Endothelial cell of umbilical vein (primary cell): ENCODE measurements at regions of chr3 and their contacts with region 1.

Region 1: GRCh38 chr3:10192953-10193691 is 28.4 kb downstream of the IRAK2 start:
- DNase-seq: peak; percentile 92
- H3K4me3 ChIP-seq: no peak overlapping the region
- H3K27ac ChIP-seq: peak overlapping the region; percentile 100
- H3K4me1 ChIP-seq: peaks cover 54% of the 10 kb centered on the region
- H3K27me3 ChIP-seq: no peaks in the 10 kb centered on the region
- CTCF ChIP-seq: peak; percentile 81 to 84
- POLR2A ChIP-seq: no peak

Region 2: GRCh38 chr3:10115326-10116137 is 77.6 kb before region 1 on chr3 and contains the start of gene BRK1:
- CTCF ChIA-PET with region 1: interaction called, 3 read pairs
- POLR2A ChIA-PET with region 1: no interaction called
- dilution Hi-C with region 1: no loop called
- intact Hi-C with region 1: loop called (anchors 2 kb)
- DNase-seq: peak; percentile 96
- H3K4me3 ChIP-seq: peak within 1 kb of the TSS; percentile 63 to 87 (median 68)
- H3K27ac ChIP-seq: peak within 1 kb of the TSS; percentile 63
- H3K4me1 ChIP-seq: peaks cover 9% of the 10 kb centered on the region
- H3K27me3 ChIP-seq: no peaks in the 10 kb centered on the region
- CTCF ChIP-seq: no peak
- POLR2A ChIP-seq: peak; percentile 98
- total RNA-seq, gene BRK1: 123 and 133 TPM in 2 replicates

Region 3: DNA sequence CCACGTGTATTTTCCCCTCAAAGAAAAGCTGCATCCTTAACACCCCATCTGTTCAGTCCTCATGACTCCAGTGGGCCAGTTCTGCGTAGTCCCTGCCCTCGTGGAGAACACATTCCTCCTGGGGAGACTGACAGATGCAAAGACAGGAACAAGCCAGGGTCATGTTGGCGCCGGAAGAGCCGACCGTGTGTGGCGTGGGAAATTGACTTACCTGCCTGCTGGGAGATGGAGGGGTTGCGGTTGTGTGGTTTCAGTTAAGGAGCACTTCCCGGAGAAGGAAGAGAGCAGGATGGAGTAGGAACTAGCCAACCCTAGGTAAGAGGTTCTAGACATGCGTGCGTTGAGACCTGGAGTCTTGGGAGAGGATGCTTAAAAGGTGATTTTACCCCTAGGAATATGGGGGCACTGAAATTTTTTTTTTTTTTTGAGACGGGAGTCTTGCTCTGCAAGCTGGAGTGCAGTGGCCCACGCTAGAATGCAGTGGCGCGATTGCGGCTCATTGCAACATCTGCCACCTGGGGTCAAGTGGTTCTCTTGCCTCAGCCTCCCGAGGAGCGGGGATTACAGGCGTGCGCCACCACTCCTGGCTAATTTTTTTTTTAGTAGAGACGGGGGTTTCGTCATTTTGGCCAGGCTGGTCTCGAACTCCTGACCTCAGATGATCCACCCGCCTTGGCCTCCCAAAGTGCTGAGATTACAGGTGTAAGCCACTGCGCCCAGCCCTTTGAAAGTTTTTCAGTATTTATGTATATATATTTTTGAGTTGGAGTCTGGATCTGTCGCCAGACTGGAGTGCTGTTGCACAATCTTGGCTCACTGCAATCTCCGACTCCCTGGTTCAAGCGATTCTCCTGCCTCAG is 50.2 kb before region 1 on chr3:
- CTCF ChIA-PET with region 1: interaction called, 11 read pairs
- POLR2A ChIA-PET with region 1: interaction called, 6 read pairs
- dilution Hi-C with region 1: no loop called
- intact Hi-C with region 1: loop called (anchors 2 kb)
- DNase-seq: no peak
- H3K4me3 ChIP-seq: peak overlapping the region; percentile 52 to 74 (median 60)
- H3K27ac ChIP-seq: no peak overlapping the region
- H3K4me1 ChIP-seq: peaks cover 11% of the 10 kb centered on the region
- H3K27me3 ChIP-seq: no peaks in the 10 kb centered on the region
- CTCF ChIP-seq: no peak
- POLR2A ChIP-seq: no peak

Region 4: GRCh38 chr3:10164546-10165393 is 28.4 kb before region 1 on chr3 and contains the start of gene IRAK2:
- CTCF ChIA-PET with region 1: interaction called, 11 read pairs
- POLR2A ChIA-PET with region 1: interaction called, 3 read pairs
- dilution Hi-C with region 1: no loop called
- intact Hi-C with region 1: loop called (anchors 1 kb)
- DNase-seq: peak; percentile 66
- H3K4me3 ChIP-seq: peak within 1 kb of the TSS; percentile 63 to 79 (median 78)
- H3K27ac ChIP-seq: peak within 1 kb of the TSS; percentile 42
- H3K4me1 ChIP-seq: peaks cover 2% of the 10 kb centered on the region
- H3K27me3 ChIP-seq: no peaks in the 10 kb centered on the region
- CTCF ChIP-seq: peak; percentile 40 to 79
- POLR2A ChIP-seq: peak; percentile 75
- total RNA-seq, gene IRAK2: 10.0 and 11.1 TPM in 2 replicates

Region 5: GRCh38 chr3:10173926-10174435 is 19.1 kb before region 1 on chr3:
- CTCF ChIA-PET with region 1: interaction called, 15 read pairs
- POLR2A ChIA-PET with region 1: interaction called, 4 read pairs
- dilution Hi-C with region 1: no loop called
- intact Hi-C with region 1: loop called (anchors 1 kb)
- DNase-seq: peak; percentile 98
- H3K4me3 ChIP-seq: no peak overlapping the region
- H3K27ac ChIP-seq: peak overlapping the region; percentile 84
- H3K4me1 ChIP-seq: peaks cover 14% of the 10 kb centered on the region
- H3K27me3 ChIP-seq: no peaks in the 10 kb centered on the region
- CTCF ChIP-seq: no peak
- POLR2A ChIP-seq: peak; percentile 46

Region 6: GRCh38 chr3:10205451-10206165 is 12.5 kb after region 1 on chr3:
- CTCF ChIA-PET with region 1: interaction called, 67 read pairs
- POLR2A ChIA-PET with region 1: interaction called, 8 read pairs
- dilution Hi-C with region 1: no loop called
- intact Hi-C with region 1: loop called (anchors 1 kb)
- DNase-seq: peak; percentile 93
- H3K4me3 ChIP-seq: no peak overlapping the region
- H3K27ac ChIP-seq: peak overlapping the region; percentile 94
- H3K4me1 ChIP-seq: peaks cover 44% of the 10 kb centered on the region
- H3K27me3 ChIP-seq: no peaks in the 10 kb centered on the region
- CTCF ChIP-seq: peak in 1 of 2 donors; percentile 3
- POLR2A ChIP-seq: peak; percentile 51

Region 7: GRCh38 chr3:10219737-10220136 is 26.6 kb after region 1 on chr3:
- CTCF ChIA-PET with region 1: interaction called, 12 read pairs
- POLR2A ChIA-PET with region 1: no interaction called
- dilution Hi-C with region 1: no loop called
- intact Hi-C with region 1: loop called (anchors 1 kb)
- DNase-seq: no peak
- H3K4me3 ChIP-seq: no peak overlapping the region
- H3K27ac ChIP-seq: no peak overlapping the region
- H3K4me1 ChIP-seq: peaks cover 25% of the 10 kb centered on the region
- H3K27me3 ChIP-seq: no peaks in the 10 kb centered on the region
- CTCF ChIP-seq: no peak
- POLR2A ChIP-seq: no peak

Region 8: DNA sequence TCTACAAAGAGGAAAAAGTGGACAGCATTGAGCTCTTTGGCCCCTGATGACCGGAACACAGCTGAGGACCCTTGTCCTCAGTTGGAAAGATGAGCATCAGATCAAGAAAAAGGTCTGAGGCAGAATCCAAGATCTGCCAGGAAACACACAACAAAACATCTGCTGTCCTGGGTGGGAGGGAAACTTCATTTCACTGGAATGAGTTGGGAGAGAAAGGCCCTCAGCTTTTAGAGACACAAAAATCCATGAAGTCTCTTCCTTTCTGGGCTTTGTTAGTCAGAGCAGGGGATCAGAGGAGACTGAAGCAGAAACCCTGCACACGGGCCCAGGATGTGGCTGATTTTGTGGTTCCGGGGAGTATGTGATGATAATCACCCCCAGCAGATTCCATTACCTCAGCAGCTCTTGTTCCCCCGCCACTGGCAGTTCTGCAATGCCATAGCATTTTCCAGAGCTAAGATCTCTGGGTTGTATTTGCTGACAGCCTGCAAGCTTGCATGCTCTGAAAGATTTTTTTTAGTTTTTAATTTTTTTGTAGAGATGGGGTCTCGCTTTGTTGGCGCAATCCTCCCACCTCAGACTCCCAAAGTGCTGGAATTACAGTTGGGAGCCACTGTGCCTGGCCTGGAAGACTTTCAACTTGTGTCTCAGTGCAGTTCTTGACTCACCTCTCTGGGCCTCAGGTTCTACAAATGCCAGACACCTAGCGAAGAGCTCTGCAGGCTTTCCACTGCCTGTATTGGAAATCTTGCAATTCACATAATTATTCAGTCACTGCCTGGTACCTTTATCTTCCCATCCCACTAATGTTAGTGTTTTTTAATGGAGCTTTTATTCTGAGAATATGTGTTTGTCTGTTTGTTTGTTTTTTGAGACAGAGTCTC is 49.3 kb after region 1 on chr3:
- CTCF ChIA-PET with region 1: no interaction called
- POLR2A ChIA-PET with region 1: no interaction called
- dilution Hi-C with region 1: no loop called
- intact Hi-C with region 1: no loop called
- DNase-seq: no peak
- H3K4me3 ChIP-seq: no peak overlapping the region
- H3K27ac ChIP-seq: no peak overlapping the region
- H3K4me1 ChIP-seq: no peaks in the 10 kb centered on the region
- H3K27me3 ChIP-seq: no peaks in the 10 kb centered on the region
- CTCF ChIP-seq: no peak
- POLR2A ChIP-seq: no peak